GM13976 (cell line): ENCODE measurements at regions of chr7 and their contacts with region 1.

Region 1: DNA sequence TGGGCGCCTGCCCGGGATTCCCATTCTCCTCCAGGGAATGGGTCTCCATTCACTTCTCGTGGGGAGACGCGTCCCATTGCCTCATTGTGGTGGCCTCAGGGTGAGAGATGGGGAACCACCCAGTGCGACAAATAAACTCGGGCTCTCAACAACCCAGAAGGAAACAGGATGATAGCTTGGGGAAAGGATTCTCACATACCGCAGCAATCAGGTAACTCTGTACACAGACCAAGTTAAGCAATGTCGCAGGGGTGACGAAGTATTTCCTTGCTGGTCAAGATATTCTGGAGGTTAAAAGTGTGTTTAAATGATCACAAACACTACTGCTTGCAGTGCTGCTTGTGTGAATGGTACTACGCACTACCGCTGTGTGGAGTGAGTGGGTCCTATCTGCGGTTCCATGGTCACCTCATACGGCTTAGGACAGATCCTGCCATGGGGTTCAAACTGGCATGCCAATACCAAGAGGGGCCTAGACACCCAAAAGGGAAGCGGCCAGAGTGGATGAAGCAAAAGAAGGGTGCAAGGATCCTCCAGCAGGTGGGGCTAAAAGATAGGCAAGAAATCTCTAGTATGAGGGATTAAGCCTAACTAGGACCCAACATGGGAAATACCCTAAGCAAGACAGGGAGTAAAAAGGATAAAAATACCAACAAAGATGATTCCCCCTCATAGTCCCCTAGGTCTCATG is 143.8 kb upstream of the TMEM106B start:
- DNase-seq: peak; percentile 15
- CTCF ChIP-seq: peak; percentile 57

Region 2: GRCh38 chr7:12337095-12337494 is 269.8 kb after region 1 on chr7:
- in situ Hi-C with region 1: loop called (anchors 10 kb)
- DNase-seq: no peak
- CTCF ChIP-seq: no peak

Region 3: GRCh38 chr7:12490117-12490688 is 422.9 kb after region 1 on chr7:
- in situ Hi-C with region 1: loop called (anchors 25 kb)
- DNase-seq: peak; percentile 22
- CTCF ChIP-seq: peak; percentile 10